ENCODE measurements at regions of chr2 and their contacts with region 1.

Region 1: GRCh38 chr2:39436592-39437510 is at the start of gene MAP4K3:
- DNase-seq: peak; percentile 94
- ATAC-seq: peak; percentile 95
- total RNA-seq, gene MAP4K3: 50.4 TPM

Region 2: GRCh38 chr2:39385172-39385571 is 51.7 kb before region 1 on chr2:
- intact Hi-C with region 1: loop called (anchors 5 kb)
- DNase-seq: no peak
- ATAC-seq: no peak

Region 3: GRCh38 chr2:39411181-39411944 is 25.5 kb before region 1 on chr2:
- intact Hi-C with region 1: loop called (anchors 1 kb)
- DNase-seq: no peak
- ATAC-seq: no peak

Region 4: DNA sequence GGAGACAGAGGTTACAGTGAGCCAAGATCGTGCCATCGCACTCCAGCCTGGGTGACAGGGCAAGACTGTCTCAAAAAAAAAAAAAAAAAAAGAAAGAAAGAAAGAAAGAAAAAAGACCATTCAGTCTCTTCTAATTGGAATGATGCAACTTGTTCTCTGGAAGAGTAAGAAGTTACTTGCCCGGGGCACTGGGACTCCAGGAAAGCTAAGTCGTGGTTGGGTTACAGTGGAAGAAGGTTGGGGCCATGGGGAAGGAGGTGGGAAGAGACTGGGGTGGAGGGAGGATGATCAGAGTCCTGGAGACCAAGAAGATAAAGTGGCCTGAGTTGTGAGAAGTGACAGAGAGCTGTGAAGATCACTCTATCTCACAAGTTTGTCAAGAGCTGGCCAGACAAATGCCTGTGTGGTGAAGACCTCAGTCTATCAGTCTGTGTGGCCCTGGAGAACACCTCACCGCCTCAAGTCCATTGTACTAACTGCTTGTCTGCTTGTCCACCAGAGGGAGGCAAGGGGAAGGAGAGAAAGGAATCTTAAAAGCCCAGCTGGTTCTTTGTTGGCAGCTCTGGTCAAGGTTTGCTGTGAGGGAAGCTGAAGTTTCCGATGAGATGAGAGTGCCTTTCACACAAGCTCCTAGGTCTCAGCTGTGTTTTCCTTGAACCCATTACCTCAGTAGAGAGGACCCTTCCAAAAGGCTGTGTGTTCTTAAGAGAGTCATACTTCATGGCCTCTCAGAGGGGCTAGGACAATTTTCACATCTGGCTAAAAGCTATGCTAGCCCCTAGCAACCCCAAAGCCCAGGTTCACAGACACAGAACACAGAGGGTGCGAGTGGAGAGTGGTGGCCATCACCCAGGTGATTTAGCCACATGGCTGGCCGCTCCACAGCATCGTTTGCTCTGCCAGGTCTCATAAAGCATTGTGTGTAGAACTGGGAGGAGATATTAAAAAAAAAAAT is 156.9 kb after region 1 on chr2:
- intact Hi-C with region 1: no loop called
- DNase-seq: no peak
- ATAC-seq: peak; percentile 66

Region 5: DNA sequence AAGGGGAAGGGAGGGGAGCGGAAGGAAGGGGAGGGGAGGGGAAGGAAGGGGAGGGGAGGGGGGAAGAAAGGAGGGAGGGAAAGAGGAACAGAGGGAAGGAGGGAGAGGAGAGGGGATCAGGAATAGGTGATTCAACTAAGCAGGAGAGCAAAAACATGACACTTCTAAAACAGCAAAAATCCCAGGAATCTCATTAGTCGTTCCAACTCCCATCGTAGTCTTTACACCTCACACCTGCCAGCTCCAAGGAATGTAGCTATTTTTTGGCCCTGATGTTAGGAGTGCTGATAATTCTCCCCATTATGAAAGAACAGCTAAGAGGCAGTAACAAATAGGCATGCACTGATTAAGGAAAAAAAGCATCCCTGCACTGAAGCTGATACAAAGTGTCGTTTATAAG is 1901.1 kb after region 1 on chr2:
- intact Hi-C with region 1: no loop called
- DNase-seq: no peak
- ATAC-seq: no peak